ENCODE measurements at regions of chr2 and their contacts with region 1.

Region 1: GRCh38 chr2:70070541-70071268 is 16.6 kb upstream of the PCBP1 start:
- DNase-seq: peak in 1 of 2 donors; percentile 87
- H3K4me3 ChIP-seq: peak overlapping the region in 1 of 2 donors; percentile 40
- H3K27ac ChIP-seq: peak overlapping the region; percentile 75 to 77
- H3K4me1 ChIP-seq: peaks cover 0 to 16% of the 10 kb centered on the region in 2 donors
- H3K27me3 ChIP-seq: no peaks in the 10 kb centered on the region
- CTCF ChIP-seq: peak; percentile 85 to 92 (median 88)

Region 2: GRCh38 chr2:70029814-70030409 is 40.8 kb before region 1 on chr2:
- intact Hi-C with region 1: loop called (anchors 5 kb)
- DNase-seq: peak; percentile 51 to 90
- H3K4me3 ChIP-seq: peak overlapping the region in 1 of 2 donors; percentile 12
- H3K27ac ChIP-seq: peak overlapping the region; percentile 85 to 89
- H3K4me1 ChIP-seq: peaks cover 0 to 16% of the 10 kb centered on the region in 2 donors
- H3K27me3 ChIP-seq: no peaks in the 10 kb centered on the region
- CTCF ChIP-seq: no peak

Measured in ascending aorta (tissue), 2 donors.